ENCODE measurements at regions of chr16 and their contacts with region 1.

Region 1: GRCh38 chr16:71610936-71611871 is 14.8 kb upstream of the MARVELD3 start:
- DNase-seq: peak; percentile 93
- ATAC-seq: peak; percentile 95
- H3K4me3 Mint-ChIP-seq: peak overlapping the region; percentile 37; the same call in 1 of the 2 replicates
- H3K27ac Mint-ChIP-seq: no peak overlapping the region
- H3K4me1 Mint-ChIP-seq: peaks cover 3% of the 10 kb centered on the region; the same call in 1 of the 2 replicates
- H3K27me3 Mint-ChIP-seq: no peaks in the 10 kb centered on the region; the same call in 1 of the 2 replicates
- CTCF ChIP-seq: peak; percentile 93

Region 2: GRCh38 chr16:71426072-71426879 is 184.9 kb before region 1 on chr16:
- CTCF ChIA-PET with region 1: interaction called, 13 read pairs
- POLR2A ChIA-PET with region 1: no interaction called
- DNase-seq: peak; percentile 94
- ATAC-seq: peak; percentile 96
- H3K4me3 Mint-ChIP-seq: peak overlapping the region; percentile 82
- H3K27ac Mint-ChIP-seq: peak overlapping the region; percentile 95
- H3K4me1 Mint-ChIP-seq: peaks cover 16% of the 10 kb centered on the region
- H3K27me3 Mint-ChIP-seq: peaks cover 53% of the 10 kb centered on the region
- CTCF ChIP-seq: no peak

Region 3: DNA sequence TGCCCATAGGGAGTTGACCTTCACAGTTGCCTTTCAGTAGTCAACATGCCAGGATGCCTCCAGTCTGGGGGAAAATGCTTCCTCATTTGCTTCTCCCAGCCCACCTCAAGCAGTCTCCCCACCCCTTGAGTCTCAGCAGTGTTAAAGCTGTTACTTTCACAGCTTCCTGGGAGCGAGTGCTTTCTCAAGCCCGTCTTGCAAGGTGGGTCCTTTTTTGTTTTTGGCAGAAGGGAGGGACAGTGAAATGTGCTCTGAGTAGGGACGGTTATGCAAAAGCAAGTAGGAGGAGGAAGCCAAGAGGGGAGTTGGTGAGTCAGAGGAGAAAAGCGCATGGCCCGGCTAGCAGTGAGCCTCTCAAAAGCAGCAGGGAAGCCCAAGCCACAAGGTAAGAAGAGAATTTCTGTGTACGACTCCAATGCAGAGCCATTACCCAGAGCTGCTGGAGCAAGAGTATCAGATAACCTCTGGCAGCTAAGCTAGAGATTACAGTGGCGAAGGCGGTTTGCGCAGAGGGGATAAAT is 85.0 kb before region 1 on chr16 and contains the start of gene CHST4:
- CTCF ChIA-PET with region 1: interaction called, 45 read pairs
- POLR2A ChIA-PET with region 1: interaction called, 4 read pairs
- DNase-seq: peak; percentile 75
- ATAC-seq: peak; percentile 89
- H3K4me3 Mint-ChIP-seq: peak within 1 kb of the TSS; percentile 74
- H3K27ac Mint-ChIP-seq: peak within 1 kb of the TSS; percentile 99
- H3K4me1 Mint-ChIP-seq: peaks cover 45% of the 10 kb centered on the region
- H3K27me3 Mint-ChIP-seq: no peaks in the 10 kb centered on the region; the same call in 1 of the 2 replicates
- CTCF ChIP-seq: no peak
- total RNA-seq, gene CHST4: 9.9 to 12.8 TPM (median 12.0 TPM) in 3 replicates

Region 4: DNA sequence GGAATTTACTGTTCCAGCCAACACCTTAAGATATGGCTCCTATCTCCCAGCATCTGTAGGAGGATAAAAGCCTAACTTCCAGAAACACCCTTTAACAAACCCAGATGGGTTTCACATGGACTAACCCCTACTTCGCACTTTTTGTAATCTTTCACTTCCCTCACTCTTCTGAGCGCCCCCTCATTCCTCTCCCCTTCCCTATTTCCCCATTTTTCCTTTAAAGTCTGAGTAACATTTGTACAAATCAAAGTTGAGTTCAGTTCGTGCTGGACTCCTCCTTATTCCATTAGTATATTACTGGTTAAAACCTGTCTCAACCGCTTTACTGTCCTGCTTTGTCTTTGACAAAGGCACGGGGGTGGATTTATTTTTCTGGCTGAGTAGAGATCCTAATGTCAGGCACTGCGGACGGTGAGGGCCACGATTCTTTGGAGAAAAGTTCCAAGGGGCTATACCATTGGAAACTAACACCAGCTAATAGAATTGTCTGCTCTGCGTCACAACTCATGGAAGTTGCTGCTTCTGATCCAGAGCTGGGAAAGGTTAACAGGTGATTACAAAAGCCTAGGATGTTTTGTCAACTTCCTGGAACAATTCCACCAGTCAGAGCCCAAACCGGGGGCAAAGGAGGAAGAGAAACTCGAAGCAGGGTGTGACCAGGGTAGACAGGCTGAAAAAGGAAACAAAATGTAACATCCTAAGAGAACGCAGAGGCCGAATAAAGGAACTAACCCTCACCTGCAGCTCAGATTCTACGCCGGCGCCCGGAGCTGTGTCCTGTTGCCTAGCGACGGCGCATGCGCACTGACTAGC is 46.8 kb before region 1 on chr16:
- CTCF ChIA-PET with region 1: interaction called, 112 read pairs
- POLR2A ChIA-PET with region 1: interaction called, 8 read pairs
- DNase-seq: no peak
- ATAC-seq: peak; percentile 3
- H3K4me3 Mint-ChIP-seq: peak overlapping the region; percentile 85
- H3K27ac Mint-ChIP-seq: peak overlapping the region; percentile 75
- H3K4me1 Mint-ChIP-seq: peaks cover 14% of the 10 kb centered on the region
- H3K27me3 Mint-ChIP-seq: peaks cover 16% of the 10 kb centered on the region
- CTCF ChIP-seq: no peak

Region 5: DNA sequence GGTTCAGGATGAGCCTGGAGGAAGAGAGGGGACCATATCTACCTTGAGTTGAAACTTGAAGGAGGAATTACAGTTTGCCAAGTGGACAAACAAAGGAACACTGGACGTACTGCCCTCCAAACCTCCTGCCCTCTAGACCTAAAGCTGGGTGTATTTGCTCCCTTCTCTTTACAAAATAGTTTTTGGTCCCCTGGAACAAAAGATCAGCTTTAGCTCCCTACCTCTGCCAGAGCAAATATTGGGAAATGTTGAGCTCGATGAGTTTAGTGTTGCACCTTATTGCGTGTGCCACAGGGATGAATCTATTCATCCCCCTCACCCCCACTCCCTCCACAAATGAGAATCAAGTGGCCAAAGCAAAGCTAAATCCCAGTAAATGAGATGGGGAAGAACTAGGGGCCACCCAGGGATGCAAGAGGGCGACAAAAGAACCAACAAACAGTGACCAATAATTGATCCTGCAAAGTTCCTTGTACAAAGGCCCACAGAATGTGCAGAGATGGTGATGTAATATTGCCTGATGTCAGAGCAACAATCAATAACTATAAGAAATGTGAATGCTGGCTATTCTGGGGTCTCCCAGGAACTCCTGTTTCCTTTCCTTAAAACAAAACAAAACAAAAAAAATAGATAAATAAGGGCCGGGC is 17.1 kb before region 1 on chr16:
- CTCF ChIA-PET with region 1: interaction called, 16 read pairs
- POLR2A ChIA-PET with region 1: no interaction called
- DNase-seq: no peak
- ATAC-seq: no peak
- H3K4me3 Mint-ChIP-seq: no peak overlapping the region
- H3K27ac Mint-ChIP-seq: no peak overlapping the region
- H3K4me1 Mint-ChIP-seq: peaks cover 5% of the 10 kb centered on the region; the same call in 1 of the 2 replicates
- H3K27me3 Mint-ChIP-seq: peaks cover 27% of the 10 kb centered on the region
- CTCF ChIP-seq: no peak

Region 6: GRCh38 chr16:71637398-71637797 is 26.2 kb after region 1 on chr16:
- CTCF ChIA-PET with region 1: interaction called, 18 read pairs
- POLR2A ChIA-PET with region 1: no interaction called
- DNase-seq: peak; percentile 38
- ATAC-seq: peak; percentile 81
- H3K4me3 Mint-ChIP-seq: no peak overlapping the region
- H3K27ac Mint-ChIP-seq: peak overlapping the region; percentile 32
- H3K4me1 Mint-ChIP-seq: peaks cover 18% of the 10 kb centered on the region
- H3K27me3 Mint-ChIP-seq: no peaks in the 10 kb centered on the region
- CTCF ChIP-seq: no peak

Measured in WTC11 (cell line).